WTC11 (cell line): ENCODE measurements at regions of chr17 and their contacts with region 1.

Region 1: GRCh38 chr17:57902800-57903759 is 52.1 kb downstream of the CUEDC1 start:
- DNase-seq: no peak
- ATAC-seq: no peak
- H3K4me3 Mint-ChIP-seq: no peak overlapping the region
- H3K27ac Mint-ChIP-seq: peak overlapping the region; percentile 71; the same call in 1 of the 2 replicates
- H3K4me1 Mint-ChIP-seq: peaks cover 59% of the 10 kb centered on the region
- H3K27me3 Mint-ChIP-seq: no peaks in the 10 kb centered on the region
- CTCF ChIP-seq: no peak

Region 2: DNA sequence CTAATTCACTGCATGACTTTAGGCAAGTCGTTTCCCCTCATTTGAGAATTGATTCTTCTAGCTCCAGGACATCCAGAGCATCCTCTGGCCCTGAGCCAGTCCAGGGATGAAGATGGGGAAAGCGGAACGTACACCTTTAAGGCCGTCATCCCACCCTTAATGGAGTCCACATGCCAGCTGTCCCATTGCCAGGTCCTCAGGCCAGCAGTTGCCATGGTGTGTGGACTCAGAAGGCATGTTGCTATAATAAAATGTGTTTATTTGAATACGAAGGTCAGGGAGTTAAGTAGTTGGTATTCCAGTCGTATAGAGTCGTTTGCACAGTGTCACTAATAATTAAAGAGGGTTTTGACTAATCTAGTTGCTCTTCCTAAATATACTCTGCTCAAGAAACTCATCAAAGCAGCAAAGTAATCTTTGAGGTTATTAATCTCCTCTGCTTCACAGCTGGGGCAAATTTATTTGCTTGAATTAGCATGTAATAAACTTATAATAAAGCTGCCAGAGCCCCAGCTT is 188.4 kb before region 1 on chr17:
- CTCF ChIA-PET with region 1: no interaction called
- POLR2A ChIA-PET with region 1: no interaction called
- DNase-seq: no peak
- ATAC-seq: no peak
- H3K4me3 Mint-ChIP-seq: no peak overlapping the region
- H3K27ac Mint-ChIP-seq: no peak overlapping the region
- H3K4me1 Mint-ChIP-seq: no peaks in the 10 kb centered on the region
- H3K27me3 Mint-ChIP-seq: peaks cover 19% of the 10 kb centered on the region
- CTCF ChIP-seq: no peak

Region 3: DNA sequence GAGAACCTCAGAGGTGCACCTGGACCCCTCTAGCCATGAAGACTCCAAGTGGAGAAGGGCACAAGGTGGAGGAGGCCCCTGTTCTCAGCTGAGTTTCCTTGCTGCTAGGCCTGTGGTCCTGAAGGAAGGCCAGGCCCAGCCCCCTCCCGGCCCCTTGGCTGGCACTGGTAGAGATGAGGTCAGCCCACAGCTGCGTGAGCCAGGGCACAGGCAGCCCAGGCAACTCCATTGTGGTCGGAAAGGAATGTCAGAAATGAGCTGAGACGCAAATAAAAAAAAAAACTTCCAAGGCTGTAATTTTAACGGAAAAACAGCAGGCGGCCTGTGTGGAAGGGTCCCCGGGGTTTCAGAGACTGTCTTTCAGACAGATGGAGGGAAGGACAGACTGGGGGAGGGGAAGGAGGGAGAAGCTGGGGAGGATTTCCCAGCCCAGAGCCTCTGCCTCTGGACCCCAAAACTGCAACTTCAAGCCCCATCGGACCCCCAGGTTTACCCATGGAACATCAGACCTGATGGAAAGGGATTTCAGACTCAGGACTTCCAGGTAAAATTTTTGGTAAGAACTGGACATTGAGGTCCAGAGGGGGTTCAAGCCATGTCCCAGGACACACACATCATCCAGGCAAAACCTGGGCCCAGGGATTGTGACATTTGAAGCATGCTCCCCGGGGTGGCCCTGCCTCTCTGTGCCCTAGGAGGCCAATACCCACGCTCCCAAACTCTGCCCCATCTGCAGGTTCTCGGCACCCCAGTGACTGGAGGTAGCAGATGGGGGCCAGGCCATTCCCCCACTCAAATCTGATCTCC is 27.6 kb before region 1 on chr17:
- CTCF ChIA-PET with region 1: interaction called, 25 read pairs
- POLR2A ChIA-PET with region 1: interaction called, 6 read pairs
- DNase-seq: peak; percentile 69
- ATAC-seq: peak; percentile 63
- H3K4me3 Mint-ChIP-seq: peak overlapping the region; percentile 46
- H3K27ac Mint-ChIP-seq: peak overlapping the region; percentile 87
- H3K4me1 Mint-ChIP-seq: peaks cover 82% of the 10 kb centered on the region
- H3K27me3 Mint-ChIP-seq: peaks cover 10% of the 10 kb centered on the region; the same call in 1 of the 2 replicates
- CTCF ChIP-seq: no peak

Region 4: GRCh38 chr17:57965521-57966160 is 62.6 kb after region 1 on chr17:
- CTCF ChIA-PET with region 1: interaction called, 11 read pairs
- POLR2A ChIA-PET with region 1: interaction called, 3 read pairs
- DNase-seq: no peak
- ATAC-seq: peak; percentile 69; the same call in 1 of the 2 replicates
- H3K4me3 Mint-ChIP-seq: no peak overlapping the region
- H3K27ac Mint-ChIP-seq: no peak overlapping the region
- H3K4me1 Mint-ChIP-seq: peaks cover 8% of the 10 kb centered on the region
- H3K27me3 Mint-ChIP-seq: peaks cover 2% of the 10 kb centered on the region; the same call in 1 of the 2 replicates
- CTCF ChIP-seq: no peak